Cardiac septum (tissue), 1 donor: ENCODE measurements at regions of chr2 and their contacts with region 1.

Region 1: GRCh38 chr2:26970244-26970920 is at the start of gene MAPRE3:
- DNase-seq: peak; percentile 91
- total RNA-seq, gene MAPRE3: 43.1 TPM

Region 2: GRCh38 chr2:26982102-26982742 is 11.8 kb after region 1 on chr2:
- intact Hi-C with region 1: loop called (anchors 1 kb)
- DNase-seq: no peak

Region 3: GRCh38 chr2:27271631-27272340 is 301.4 kb after region 1 on chr2:
- intact Hi-C with region 1: loop called (anchors 10 kb)
- DNase-seq: no peak